Endothelial cell of umbilical vein (primary cell): ENCODE measurements at regions of chr16 and their contacts with region 1.

Region 1: DNA sequence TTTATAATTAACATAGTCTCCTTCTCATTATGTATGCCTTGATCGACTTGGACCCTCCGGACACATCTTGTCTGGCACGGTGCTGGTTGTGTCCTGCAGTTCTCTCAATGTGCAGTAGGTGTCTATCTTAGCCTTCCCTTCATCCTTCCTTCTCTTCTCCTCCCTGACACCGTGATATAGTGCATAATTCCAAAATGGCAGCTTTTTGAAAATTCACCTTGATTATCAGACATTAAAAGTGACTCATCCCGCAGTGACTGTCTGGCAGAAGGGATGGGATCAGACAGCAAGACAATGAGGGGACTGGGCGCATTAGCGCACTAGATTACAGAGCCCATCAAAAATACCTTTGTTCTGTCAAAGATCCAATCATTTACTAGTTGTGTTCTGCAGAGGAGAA is 70.0 kb upstream of the PMFBP1 start:
- DNase-seq: peak; percentile 66
- H3K4me3 ChIP-seq: no peak overlapping the region
- H3K27ac ChIP-seq: no peak overlapping the region
- H3K4me1 ChIP-seq: no peaks in the 10 kb centered on the region
- H3K27me3 ChIP-seq: no peaks in the 10 kb centered on the region
- CTCF ChIP-seq: peak; percentile 79 to 85
- POLR2A ChIP-seq: no peak

Region 2: DNA sequence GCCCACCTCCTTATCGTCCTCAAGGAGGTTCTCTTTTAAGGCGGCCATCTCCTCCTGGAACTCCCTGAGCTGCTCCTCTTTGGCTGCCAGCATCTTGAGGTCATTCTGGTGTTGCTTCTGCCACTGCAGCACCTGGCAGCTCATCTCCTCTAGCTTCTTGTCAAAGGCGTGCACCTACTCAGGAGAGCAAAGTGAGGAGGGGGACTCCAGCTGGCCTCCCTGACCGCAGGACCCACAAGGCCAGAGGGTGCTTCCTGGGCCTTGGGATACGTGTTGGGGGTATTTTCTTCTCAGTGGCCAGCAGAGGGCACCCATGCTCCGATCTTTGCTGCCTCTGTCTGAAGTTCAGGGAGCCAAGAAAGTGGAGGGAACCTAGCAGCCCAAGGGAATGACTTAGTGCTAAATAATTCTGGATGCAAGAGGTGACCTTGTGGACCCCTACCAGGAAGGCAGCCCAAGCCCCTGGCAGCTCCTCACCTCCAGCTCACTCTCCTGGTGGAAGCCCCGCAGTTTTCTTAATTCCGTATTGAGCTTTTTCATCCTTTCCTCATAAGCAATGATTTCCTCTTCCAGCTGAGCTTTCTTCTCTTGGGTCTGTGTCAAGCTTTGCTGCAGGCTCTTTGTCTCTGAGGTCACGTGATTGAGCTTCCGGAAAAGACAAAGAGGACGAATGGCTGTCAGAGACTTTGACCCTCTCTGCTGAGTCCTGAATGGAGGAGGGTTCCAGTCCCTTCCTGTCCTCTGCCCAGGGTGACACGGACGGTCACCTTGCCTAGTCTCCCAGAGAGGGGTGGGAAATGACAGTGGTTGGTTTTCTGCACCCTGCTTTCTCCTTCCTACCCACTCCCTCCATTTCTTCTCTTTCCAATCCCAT is 116.9 kb before region 1 on chr16:
- CTCF ChIA-PET with region 1: interaction called, 18 read pairs
- POLR2A ChIA-PET with region 1: no interaction called
- dilution Hi-C with region 1: no loop called
- intact Hi-C with region 1: loop called (anchors 1 kb)
- DNase-seq: peak; percentile 67
- H3K4me3 ChIP-seq: no peak overlapping the region
- H3K27ac ChIP-seq: no peak overlapping the region
- H3K4me1 ChIP-seq: peaks cover 3% of the 10 kb centered on the region
- H3K27me3 ChIP-seq: no peaks in the 10 kb centered on the region
- CTCF ChIP-seq: peak; percentile 76 to 82
- POLR2A ChIP-seq: no peak

Region 3: DNA sequence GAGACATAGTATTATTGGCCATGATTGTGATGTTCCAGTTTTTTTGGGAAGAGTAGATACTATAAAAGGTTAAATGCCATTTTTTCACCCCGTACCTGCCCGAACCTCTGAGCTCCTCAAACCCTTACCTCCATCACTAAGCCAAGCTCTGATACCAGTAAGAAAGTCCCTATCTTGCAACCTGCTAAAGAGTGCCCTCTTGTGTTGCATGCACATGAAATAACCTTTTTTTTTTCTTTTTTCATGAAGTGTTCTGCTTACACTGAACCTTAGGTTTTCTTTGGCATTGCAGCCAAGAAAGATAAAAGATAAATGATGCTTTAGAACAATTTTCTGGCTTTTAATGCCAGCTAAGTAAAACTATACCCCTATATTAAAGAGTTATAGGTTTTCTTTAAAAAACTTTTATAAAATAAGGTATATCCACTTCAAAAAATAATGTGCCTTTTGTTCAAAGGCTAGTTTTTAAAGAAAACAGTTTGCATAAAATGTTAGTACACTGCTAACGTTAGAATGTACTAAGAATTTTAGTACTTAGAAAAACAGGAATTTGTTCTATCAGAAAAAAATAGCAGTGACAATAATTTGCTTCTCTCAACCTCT is 225.3 kb after region 1 on chr16:
- CTCF ChIA-PET with region 1: interaction called, 183 read pairs
- POLR2A ChIA-PET with region 1: no interaction called
- dilution Hi-C with region 1: no loop called
- intact Hi-C with region 1: loop called (anchors 1 kb)
- DNase-seq: peak; percentile 72
- H3K4me3 ChIP-seq: no peak overlapping the region
- H3K27ac ChIP-seq: no peak overlapping the region
- H3K4me1 ChIP-seq: peaks cover 7% of the 10 kb centered on the region
- H3K27me3 ChIP-seq: no peaks in the 10 kb centered on the region
- CTCF ChIP-seq: peak; percentile 42 to 53
- POLR2A ChIP-seq: no peak

Region 4: DNA sequence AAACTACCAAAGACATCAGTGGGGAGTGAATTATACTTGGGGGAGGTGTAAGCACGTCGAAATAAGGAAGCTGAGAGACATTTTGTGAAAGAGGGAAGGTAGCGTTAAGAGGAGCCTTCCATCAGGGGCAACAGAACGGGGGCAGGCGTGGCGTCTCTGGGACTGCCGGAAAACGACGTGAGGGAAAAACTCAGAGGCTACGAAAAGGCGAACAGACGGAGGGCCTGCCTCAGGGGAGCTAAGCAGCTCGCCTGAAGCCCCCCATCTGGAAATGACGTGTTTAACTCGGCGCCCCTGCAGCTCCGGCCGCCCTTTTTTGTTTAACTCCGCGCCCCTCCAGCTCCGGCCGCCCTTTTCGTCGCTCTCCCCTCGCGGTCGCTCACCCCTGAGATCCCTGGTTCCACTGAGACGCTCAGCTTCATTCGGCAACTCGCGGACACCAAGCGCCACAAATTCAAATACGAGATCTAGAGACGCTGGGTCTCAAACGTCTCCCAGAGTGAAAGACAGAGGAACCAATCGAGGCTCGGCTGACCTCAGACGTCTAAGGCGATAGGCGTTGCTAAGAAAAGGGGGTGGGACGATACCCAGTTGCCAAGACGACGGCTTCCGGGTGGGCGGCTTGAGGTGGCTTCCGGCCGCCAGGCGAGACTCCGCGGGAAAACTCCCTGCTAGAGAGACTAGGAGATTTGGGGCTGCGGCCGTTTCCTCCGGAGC is 422.7 kb after region 1 on chr16:
- CTCF ChIA-PET with region 1: no interaction called
- POLR2A ChIA-PET with region 1: no interaction called
- dilution Hi-C with region 1: no loop called
- intact Hi-C with region 1: loop called (anchors 10 kb)
- DNase-seq: peak; percentile 98
- H3K4me3 ChIP-seq: peak overlapping the region; percentile 89 to 96 (median 95)
- H3K27ac ChIP-seq: peak overlapping the region; percentile 88
- H3K4me1 ChIP-seq: peaks cover 10% of the 10 kb centered on the region
- H3K27me3 ChIP-seq: no peaks in the 10 kb centered on the region
- CTCF ChIP-seq: no peak
- POLR2A ChIP-seq: peak; percentile 59

Region 5: GRCh38 chr16:73196670-73197069 is 954.7 kb after region 1 on chr16:
- CTCF ChIA-PET with region 1: no interaction called
- POLR2A ChIA-PET with region 1: no interaction called
- dilution Hi-C with region 1: no loop called
- intact Hi-C with region 1: loop called (anchors 10 kb)
- DNase-seq: peak; percentile 78
- H3K4me3 ChIP-seq: no peak overlapping the region
- H3K27ac ChIP-seq: no peak overlapping the region
- H3K4me1 ChIP-seq: no peaks in the 10 kb centered on the region
- H3K27me3 ChIP-seq: peaks cover 5 to 10% of the 10 kb centered on the region in 2 experiments
- CTCF ChIP-seq: peak; percentile 56 to 60
- POLR2A ChIP-seq: no peak

Region 6: GRCh38 chr16:73956587-73957494 is 1714.9 kb after region 1 on chr16:
- CTCF ChIA-PET with region 1: interaction called, 7 read pairs
- POLR2A ChIA-PET with region 1: no interaction called
- dilution Hi-C with region 1: no loop called
- intact Hi-C with region 1: loop called (anchors 1 kb)
- DNase-seq: peak; percentile 53
- H3K4me3 ChIP-seq: no peak overlapping the region
- H3K27ac ChIP-seq: no peak overlapping the region
- H3K4me1 ChIP-seq: no peaks in the 10 kb centered on the region
- H3K27me3 ChIP-seq: no peaks in the 10 kb centered on the region
- CTCF ChIP-seq: peak; percentile 69 to 72
- POLR2A ChIP-seq: no peak